Breast epithelium (tissue), 4 donors: ENCODE measurements at regions of chr19 and their contacts with region 1.

Region 1: DNA sequence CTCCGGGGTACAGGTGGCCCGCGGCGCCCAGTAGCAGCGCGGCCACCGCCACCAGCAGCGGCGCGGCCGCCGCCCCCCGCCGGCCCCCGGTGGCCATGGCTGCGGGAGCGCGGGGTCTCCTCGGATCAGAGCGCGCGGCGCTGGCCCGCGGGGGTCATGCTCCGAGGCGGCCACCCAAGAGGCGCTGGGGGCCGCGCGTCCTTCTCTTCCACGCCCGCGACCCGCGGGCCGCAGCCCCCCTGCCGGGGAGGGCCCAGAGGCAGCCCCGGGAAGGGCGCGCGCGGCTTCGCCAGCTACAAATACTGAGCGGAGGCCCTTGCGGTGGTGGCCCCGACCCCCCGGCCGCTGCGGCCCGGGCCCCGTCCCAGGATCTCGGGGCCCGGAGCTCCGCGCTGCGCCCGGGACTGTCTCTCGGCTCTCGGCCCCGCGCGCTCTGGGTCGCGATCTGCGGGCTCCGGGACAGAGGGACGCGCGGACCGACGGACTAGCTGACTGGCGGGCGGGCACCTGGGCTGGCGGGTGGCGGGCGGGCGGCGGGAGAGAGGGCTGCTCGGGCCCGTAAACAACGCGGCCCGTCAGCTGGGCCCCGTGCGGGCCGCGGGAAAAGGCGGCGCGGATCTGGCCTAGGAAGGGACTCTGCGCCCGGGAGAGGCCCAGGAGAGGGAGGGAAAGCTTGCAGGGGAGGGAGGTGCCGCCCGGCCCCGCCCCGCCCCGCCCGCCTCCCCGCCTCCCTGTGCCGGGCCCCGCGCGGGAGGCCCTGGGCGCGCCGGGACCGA is at the start of gene INSR:
- DNase-seq: peak; percentile 86 to 91
- H3K4me3 ChIP-seq: peak within 1 kb of the TSS; percentile 97 to 98 (median 97)
- H3K27ac ChIP-seq: peak within 1 kb of the TSS; percentile 93 to 95
- H3K4me1 ChIP-seq: no peaks in the 10 kb centered on the region
- H3K27me3 ChIP-seq: no peaks in the 10 kb centered on the region
- CTCF ChIP-seq: no peak
- POLR2A ChIP-seq: no peak
- total RNA-seq, gene INSR: 66.3 to 108 (median 104) TPM

Region 2: GRCh38 chr19:7197760-7198696 is 96.0 kb before region 1 on chr19:
- intact Hi-C with region 1: loop called (anchors 1 kb)
- DNase-seq: peak; percentile 79 to 86
- H3K4me3 ChIP-seq: peak overlapping the region; percentile 58 to 75 (median 72)
- H3K27ac ChIP-seq: peak overlapping the region; percentile 88 to 96
- H3K4me1 ChIP-seq: peaks cover 0 to 5% of the 10 kb centered on the region in 2 donors
- H3K27me3 ChIP-seq: no peaks in the 10 kb centered on the region
- CTCF ChIP-seq: peak; percentile 38 to 52 (median 47)
- POLR2A ChIP-seq: peak; percentile 40

Region 3: GRCh38 chr19:8304841-8305621 is 1011.0 kb after region 1 on chr19:
- intact Hi-C with region 1: loop called (anchors 5 kb)
- DNase-seq: peak; percentile 16 to 49
- H3K4me3 ChIP-seq: no peak overlapping the region
- H3K27ac ChIP-seq: no peak overlapping the region
- H3K4me1 ChIP-seq: peaks cover 3 to 9% of the 10 kb centered on the region in 2 donors
- H3K27me3 ChIP-seq: no peaks in the 10 kb centered on the region
- CTCF ChIP-seq: no peak
- POLR2A ChIP-seq: no peak